ENCODE measurements at regions of chr6 and their contacts with region 1.

Region 1: GRCh38 chr6:26342106-26343004 is 22.6 kb upstream of the BTN3A2 start:
- DNase-seq: no peak
- ATAC-seq: peak; percentile 10; the same call in 1 of the 2 replicates
- H3K4me3 ChIP-seq: peak overlapping the region; percentile 17 to 58
- H3K27ac ChIP-seq: no peak overlapping the region
- H3K4me1 ChIP-seq: 0 out of 2 replicates have a peak, but pooled peaks cover 5% of the 10 kb centered on the region
- H3K27me3 ChIP-seq: no peaks in the 10 kb centered on the region
- CTCF ChIP-seq: no peak

Region 2: DNA sequence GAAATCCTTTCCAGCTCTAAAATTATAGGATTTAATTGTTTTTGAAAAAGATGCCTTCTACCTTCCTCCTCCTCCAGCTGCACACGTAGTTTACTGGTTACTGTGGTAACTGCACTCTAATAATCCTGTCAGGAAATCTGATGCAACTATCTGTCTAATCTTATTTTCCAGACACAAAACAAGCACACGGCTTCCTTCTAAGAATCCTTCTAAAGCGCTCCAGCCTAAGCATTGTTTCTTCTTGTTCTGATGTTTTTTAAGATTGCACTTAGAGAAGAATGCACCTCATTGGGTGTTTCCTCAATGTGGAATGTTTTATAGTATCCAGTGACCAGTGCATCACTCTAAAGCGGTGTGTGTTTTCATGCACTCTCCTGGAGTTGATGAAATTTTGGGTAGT is 999.6 kb before region 1 on chr6:
- CTCF ChIA-PET with region 1: no interaction called
- POLR2A ChIA-PET with region 1: no interaction called
- in situ Hi-C with region 1: no loop called
- intact Hi-C with region 1: no loop called
- DNase-seq: no peak
- ATAC-seq: no peak
- H3K4me3 ChIP-seq: no peak overlapping the region
- H3K27ac ChIP-seq: no peak overlapping the region
- H3K4me1 ChIP-seq: no peaks in the 10 kb centered on the region
- H3K27me3 ChIP-seq: no peaks in the 10 kb centered on the region
- CTCF ChIP-seq: no peak

Region 3: GRCh38 chr6:26249957-26250697 is 92.2 kb before region 1 on chr6:
- CTCF ChIA-PET with region 1: no interaction called
- POLR2A ChIA-PET with region 1: no interaction called
- in situ Hi-C with region 1: no loop called
- intact Hi-C with region 1: no loop called
- DNase-seq: no peak
- ATAC-seq: no peak
- H3K4me3 ChIP-seq: peak overlapping the region in 1 of 2 experiments; percentile 28; a peak in 1 of 4 replicates
- H3K27ac ChIP-seq: no peak overlapping the region
- H3K4me1 ChIP-seq: peaks cover 3% of the 10 kb centered on the region
- H3K27me3 ChIP-seq: no peaks in the 10 kb centered on the region
- CTCF ChIP-seq: no peak

Region 4: GRCh38 chr6:26421259-26422144 is 79.1 kb after region 1 on chr6:
- CTCF ChIA-PET with region 1: no interaction called
- POLR2A ChIA-PET with region 1: no interaction called
- in situ Hi-C with region 1: no loop called
- intact Hi-C with region 1: loop called (anchors 5 kb)
- DNase-seq: peak; percentile 69
- ATAC-seq: peak; percentile 100
- H3K4me3 ChIP-seq: peak overlapping the region; percentile 72 to 97
- H3K27ac ChIP-seq: peak overlapping the region; percentile 90
- H3K4me1 ChIP-seq: peaks cover 5% of the 10 kb centered on the region; the same call in 1 of the 2 replicates
- H3K27me3 ChIP-seq: no peaks in the 10 kb centered on the region
- CTCF ChIP-seq: no peak

Region 5: GRCh38 chr6:26537846-26538571 is 195.7 kb after region 1 on chr6 and contains the start of gene HMGN4:
- CTCF ChIA-PET with region 1: no interaction called
- POLR2A ChIA-PET with region 1: no interaction called
- in situ Hi-C with region 1: no loop called
- intact Hi-C with region 1: loop called (anchors 5 kb)
- DNase-seq: peak; percentile 92
- ATAC-seq: peak; percentile 84
- H3K4me3 ChIP-seq: peak within 1 kb of the TSS; percentile 79 to 82
- H3K27ac ChIP-seq: peak within 1 kb of the TSS; percentile 96
- H3K4me1 ChIP-seq: peaks cover 27% of the 10 kb centered on the region
- H3K27me3 ChIP-seq: no peaks in the 10 kb centered on the region
- CTCF ChIP-seq: no peak
- total RNA-seq, gene HMGN4: 60.5 TPM

Region 6: DNA sequence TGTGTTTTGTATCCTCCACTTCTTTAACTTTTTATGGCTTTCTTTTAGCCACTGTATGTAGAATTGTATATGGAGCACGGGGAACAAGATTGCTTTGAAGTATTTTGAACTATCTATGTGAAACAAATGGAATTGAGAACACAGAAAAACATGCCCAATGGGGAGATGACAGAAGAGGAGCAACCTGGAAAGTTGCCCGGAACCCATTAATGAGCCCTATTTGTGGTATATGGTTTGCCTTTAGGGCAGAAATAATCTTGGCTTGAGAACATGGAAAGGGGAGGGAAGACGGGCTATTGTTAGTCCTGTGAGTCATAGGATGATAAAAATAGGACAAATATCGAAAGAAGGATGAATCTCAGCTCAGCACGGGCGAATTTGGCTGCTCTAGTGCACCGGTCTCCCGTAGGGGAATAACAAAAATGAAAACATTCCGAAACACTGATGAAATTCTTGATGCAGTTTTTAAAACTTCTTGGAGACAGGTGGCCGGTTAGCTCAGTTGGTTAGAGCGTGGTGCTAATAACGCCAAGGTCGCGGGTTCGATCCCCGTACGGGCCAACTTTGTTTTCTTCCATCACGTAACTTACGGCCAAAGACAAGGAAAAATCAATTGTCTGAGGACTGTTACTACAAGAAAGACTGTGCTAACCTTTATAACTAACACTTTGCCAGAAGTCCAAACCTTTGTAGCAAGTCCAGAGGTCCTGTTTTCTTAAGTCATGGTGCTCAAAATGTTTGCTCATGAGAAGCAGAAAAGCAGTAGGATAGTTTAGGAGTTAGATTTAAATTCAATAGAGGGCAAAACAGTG is 211.5 kb after region 1 on chr6:
- CTCF ChIA-PET with region 1: interaction called, 5 read pairs
- POLR2A ChIA-PET with region 1: no interaction called
- in situ Hi-C with region 1: no loop called
- intact Hi-C with region 1: loop called (anchors 5 kb)
- DNase-seq: peak; percentile 97
- ATAC-seq: peak; percentile 57
- H3K4me3 ChIP-seq: peak overlapping the region; percentile 77 to 96
- H3K27ac ChIP-seq: peak overlapping the region; percentile 73
- H3K4me1 ChIP-seq: peaks cover 23% of the 10 kb centered on the region
- H3K27me3 ChIP-seq: no peaks in the 10 kb centered on the region
- CTCF ChIP-seq: no peak

Measured in Panc1 (cell line).